ENCODE measurements at regions of chr20 and their contacts with region 1.

Region 1: DNA sequence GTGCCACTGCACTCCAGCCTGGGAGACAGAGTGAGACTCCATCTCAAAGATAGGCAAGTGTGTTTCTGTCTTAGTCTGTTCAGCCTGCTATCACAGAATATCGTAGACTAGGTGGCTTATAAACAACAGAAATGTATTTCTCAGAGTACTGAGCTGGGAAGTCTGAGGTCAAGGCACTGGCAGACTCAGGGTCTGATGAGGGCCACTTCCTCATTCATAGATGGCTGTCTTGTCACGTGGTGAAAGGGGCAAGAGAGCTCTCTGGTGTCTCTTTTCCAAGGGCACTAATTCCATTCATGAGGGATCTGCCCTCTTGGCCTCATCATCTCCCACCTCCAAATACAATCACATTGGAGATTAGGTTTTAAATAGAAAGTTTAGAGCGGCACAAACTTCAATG is 95.6 kb upstream of the PHACTR3 start:
- DNase-seq: no peak
- H3K4me3 Mint-ChIP-seq: no peak overlapping the region
- H3K27ac Mint-ChIP-seq: no peak overlapping the region
- H3K4me1 Mint-ChIP-seq: no peaks in the 10 kb centered on the region
- H3K27me3 Mint-ChIP-seq: peaks cover 49% of the 10 kb centered on the region
- CTCF ChIP-seq: no peak

Region 2: GRCh38 chr20:59518881-59519688 is 10.4 kb after region 1 on chr20:
- CTCF ChIA-PET with region 1: interaction called, 24 read pairs
- POLR2A ChIA-PET with region 1: no interaction called
- intact Hi-C with region 1: no loop called
- DNase-seq: peak; percentile 62
- H3K4me3 Mint-ChIP-seq: no peak overlapping the region
- H3K27ac Mint-ChIP-seq: no peak overlapping the region
- H3K4me1 Mint-ChIP-seq: no peaks in the 10 kb centered on the region
- H3K27me3 Mint-ChIP-seq: peaks cover 90% of the 10 kb centered on the region
- CTCF ChIP-seq: peak; percentile 82